Left ventricle myocardium inferior (tissue), 1 donor: ENCODE measurements at regions of chr15 and their contacts with region 1.

Region 1: GRCh38 chr15:31311735-31312619 is 14.7 kb upstream of the KLF13 start:
- DNase-seq: no peak
- H3K4me3 ChIP-seq: no peak overlapping the region
- H3K27ac ChIP-seq: no peak overlapping the region
- H3K4me1 ChIP-seq: peaks cover 7% of the 10 kb centered on the region
- H3K27me3 ChIP-seq: peaks cover 4% of the 10 kb centered on the region
- CTCF ChIP-seq: no peak

Region 2: DNA sequence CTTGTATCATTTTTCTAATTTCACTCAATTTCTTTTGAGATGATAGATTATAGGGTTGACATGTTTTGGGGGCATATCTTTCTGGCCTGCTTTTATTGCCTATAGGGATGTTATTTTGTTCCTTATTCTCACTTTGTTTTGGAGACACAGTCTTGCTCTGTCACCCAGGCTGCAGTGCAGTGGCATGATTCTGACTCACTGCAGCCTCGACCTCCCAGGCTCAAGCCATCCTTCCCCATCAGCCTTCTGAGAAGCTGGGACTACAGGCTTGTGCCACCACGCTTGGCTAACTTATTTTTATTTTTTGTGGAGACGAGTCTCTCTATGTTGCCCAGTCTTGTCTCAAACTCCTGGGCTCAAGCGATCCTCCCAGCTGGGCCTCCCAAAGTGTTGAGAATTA is 481.0 kb before region 1 on chr15:
- intact Hi-C with region 1: no loop called
- DNase-seq: no peak
- H3K4me3 ChIP-seq: no peak overlapping the region
- H3K27ac ChIP-seq: no peak overlapping the region
- H3K4me1 ChIP-seq: no peaks in the 10 kb centered on the region
- H3K27me3 ChIP-seq: no peaks in the 10 kb centered on the region
- CTCF ChIP-seq: no peak

Region 3: DNA sequence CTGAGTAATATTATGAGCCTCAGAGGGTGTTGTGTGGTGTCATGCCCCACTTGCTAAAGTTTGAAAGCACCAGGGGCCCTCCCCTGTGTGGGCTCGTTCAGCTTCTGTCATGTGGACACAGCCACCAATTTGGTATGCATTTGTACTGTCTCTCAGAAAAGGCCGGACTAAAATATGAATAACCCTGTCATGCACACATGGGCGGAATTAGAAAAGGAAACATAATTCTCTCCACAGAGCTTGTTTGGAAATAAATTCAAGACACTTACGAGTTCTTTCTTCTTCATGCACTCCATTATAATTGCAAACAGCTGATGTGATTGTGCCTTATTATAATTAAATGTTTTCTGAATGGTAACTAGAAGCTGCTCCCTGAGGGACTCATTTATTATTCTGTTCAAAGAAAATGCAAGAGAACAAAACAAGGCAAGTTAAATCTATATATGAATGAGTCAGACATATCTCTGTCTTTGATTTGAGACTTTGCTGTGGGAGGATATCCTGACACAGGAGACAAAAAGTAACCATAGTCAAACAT is 249.6 kb before region 1 on chr15:
- intact Hi-C with region 1: no loop called
- DNase-seq: no peak
- H3K4me3 ChIP-seq: no peak overlapping the region
- H3K27ac ChIP-seq: peak overlapping the region; percentile 78
- H3K4me1 ChIP-seq: peaks cover 16% of the 10 kb centered on the region
- H3K27me3 ChIP-seq: no peaks in the 10 kb centered on the region
- CTCF ChIP-seq: no peak

Region 4: GRCh38 chr15:31157644-31158091 is 154.3 kb before region 1 on chr15:
- intact Hi-C with region 1: no loop called
- DNase-seq: no peak
- H3K4me3 ChIP-seq: no peak overlapping the region
- H3K27ac ChIP-seq: no peak overlapping the region
- H3K4me1 ChIP-seq: peaks cover 16% of the 10 kb centered on the region
- H3K27me3 ChIP-seq: no peaks in the 10 kb centered on the region
- CTCF ChIP-seq: no peak

Region 5: DNA sequence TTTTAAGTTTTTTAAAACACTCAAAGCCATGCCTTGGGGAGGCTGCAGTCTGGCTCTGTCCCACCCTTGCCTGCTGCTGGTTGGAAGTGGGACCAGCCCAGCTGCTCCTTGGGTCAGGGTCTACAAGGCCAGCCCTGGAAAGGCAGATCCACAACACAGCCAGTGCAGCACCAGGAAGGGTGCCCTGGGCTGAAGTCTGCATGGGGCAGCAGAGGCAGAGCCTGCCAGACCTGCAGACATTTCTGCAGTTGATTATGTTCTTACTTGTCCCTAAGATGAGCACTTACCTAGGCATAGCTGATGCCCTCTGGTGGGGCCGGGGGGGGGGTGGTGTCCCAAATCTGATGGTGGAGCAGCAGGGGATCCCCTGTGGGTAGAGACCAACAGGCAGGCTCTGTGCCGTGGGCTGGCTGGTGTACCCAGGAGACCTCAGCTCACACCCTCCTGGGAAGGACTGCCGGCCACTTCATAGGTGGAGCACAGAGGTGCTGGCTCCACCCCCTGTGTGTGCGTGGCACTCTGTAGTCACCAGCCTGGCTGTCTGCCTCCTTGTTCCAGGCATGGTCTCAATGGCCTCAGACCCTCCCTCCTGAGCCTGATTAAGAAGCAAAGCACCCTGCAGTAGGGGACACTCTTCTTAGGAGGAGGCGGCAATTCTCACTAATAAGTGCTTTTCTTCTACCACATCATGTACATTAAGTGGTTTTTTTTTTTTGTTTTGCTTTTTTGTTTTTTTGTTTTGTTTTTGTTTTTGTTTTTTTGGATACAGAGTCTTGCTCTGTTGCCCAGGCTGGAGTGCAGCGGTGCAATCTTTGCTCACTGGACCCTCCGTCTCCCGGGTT is 82.8 kb before region 1 on chr15:
- intact Hi-C with region 1: loop called (anchors 10 kb)
- DNase-seq: no peak
- H3K4me3 ChIP-seq: no peak overlapping the region
- H3K27ac ChIP-seq: no peak overlapping the region
- H3K4me1 ChIP-seq: peaks cover 13% of the 10 kb centered on the region
- H3K27me3 ChIP-seq: no peaks in the 10 kb centered on the region
- CTCF ChIP-seq: no peak

Region 6: GRCh38 chr15:31245135-31245689 is 66.8 kb before region 1 on chr15:
- intact Hi-C with region 1: loop called (anchors 2 kb)
- DNase-seq: no peak
- H3K4me3 ChIP-seq: no peak overlapping the region
- H3K27ac ChIP-seq: no peak overlapping the region
- H3K4me1 ChIP-seq: no peaks in the 10 kb centered on the region
- H3K27me3 ChIP-seq: no peaks in the 10 kb centered on the region
- CTCF ChIP-seq: no peak

Region 7: GRCh38 chr15:31296646-31297574 is 15.1 kb before region 1 on chr15:
- intact Hi-C with region 1: no loop called
- DNase-seq: no peak
- H3K4me3 ChIP-seq: no peak overlapping the region
- H3K27ac ChIP-seq: no peak overlapping the region
- H3K4me1 ChIP-seq: peaks cover 44% of the 10 kb centered on the region
- H3K27me3 ChIP-seq: no peaks in the 10 kb centered on the region
- CTCF ChIP-seq: no peak